Right ventricle myocardium superior (tissue), 1 donor: ENCODE measurements at regions of chr5 and their contacts with region 1.

Region 1: GRCh38 chr5:160021831-160022446 is 13.0 kb downstream of the TTC1 start:
- DNase-seq: no peak
- ATAC-seq: peak; percentile 93

Region 2: GRCh38 chr5:160159991-160160792 is 138.3 kb after region 1 on chr5:
- intact Hi-C with region 1: no loop called
- DNase-seq: no peak
- ATAC-seq: no peak

Region 3: GRCh38 chr5:160188142-160189015 is 166.4 kb after region 1 on chr5:
- intact Hi-C with region 1: no loop called
- DNase-seq: peak; percentile 83
- ATAC-seq: peak; percentile 84

Region 4: DNA sequence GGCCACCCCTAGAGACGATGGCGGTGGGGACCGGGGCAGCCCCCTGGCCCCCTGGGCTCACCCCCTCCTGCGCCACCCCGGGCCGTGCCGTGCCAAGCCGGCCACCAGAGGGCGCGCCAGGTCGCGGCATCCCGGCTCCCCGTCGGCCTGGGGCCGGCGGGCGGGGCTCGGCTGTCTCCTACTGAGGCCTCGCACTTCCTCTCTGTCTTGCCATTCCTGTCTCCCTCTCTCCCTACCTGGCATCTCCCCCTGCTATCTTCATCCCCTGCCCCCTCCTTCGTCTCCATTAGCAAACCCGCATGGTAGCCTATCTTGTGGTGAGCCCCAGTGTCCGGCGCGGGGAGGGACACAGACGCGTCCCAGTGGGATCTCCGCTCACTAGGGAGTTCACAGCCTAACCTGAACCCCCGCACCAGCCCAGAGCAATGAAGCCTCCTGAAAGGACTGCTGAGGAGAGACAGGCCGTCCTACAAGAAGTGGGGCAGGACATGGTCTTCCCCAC is 177.5 kb after region 1 on chr5:
- intact Hi-C with region 1: loop called (anchors 5 kb)
- DNase-seq: peak; percentile 87
- ATAC-seq: peak; percentile 99

Region 5: GRCh38 chr5:160221082-160221481 is 199.1 kb after region 1 on chr5:
- intact Hi-C with region 1: no loop called
- DNase-seq: no peak
- ATAC-seq: no peak

Region 6: DNA sequence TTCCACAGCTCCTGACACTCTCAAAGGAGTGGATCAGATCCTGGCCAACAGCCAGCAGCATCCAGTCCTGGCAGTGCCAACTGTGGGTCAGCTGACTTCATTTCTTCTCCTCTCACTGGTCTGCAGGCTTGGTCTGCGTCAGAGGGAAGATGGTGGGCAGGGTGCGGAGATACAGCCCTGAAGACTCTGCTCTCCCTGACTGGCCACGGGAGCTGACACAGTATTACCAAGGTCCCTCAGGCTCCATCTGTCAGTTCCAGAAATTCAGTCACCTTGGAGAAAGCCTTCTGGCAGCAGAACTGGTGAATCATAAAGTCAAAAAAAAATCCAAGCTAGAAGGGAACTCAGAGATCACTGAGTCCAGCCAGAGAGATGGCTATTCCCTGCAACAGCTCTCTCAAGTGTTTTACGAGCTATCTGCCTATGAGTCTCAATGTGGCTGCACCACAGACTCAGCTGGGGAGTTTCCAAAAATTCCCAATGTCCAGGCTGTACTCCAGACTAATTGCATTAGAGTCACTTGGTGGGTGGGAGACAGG is 320.5 kb after region 1 on chr5:
- intact Hi-C with region 1: loop called (anchors 5 kb)
- DNase-seq: no peak
- ATAC-seq: no peak

Region 7: GRCh38 chr5:160399402-160400353 is 377.7 kb after region 1 on chr5 and contains the start of gene FAM200C:
- intact Hi-C with region 1: loop called (anchors 10 kb)
- DNase-seq: peak; percentile 93
- ATAC-seq: peak; percentile 99
- total RNA-seq, gene FAM200C: 3.8 TPM

Region 8: DNA sequence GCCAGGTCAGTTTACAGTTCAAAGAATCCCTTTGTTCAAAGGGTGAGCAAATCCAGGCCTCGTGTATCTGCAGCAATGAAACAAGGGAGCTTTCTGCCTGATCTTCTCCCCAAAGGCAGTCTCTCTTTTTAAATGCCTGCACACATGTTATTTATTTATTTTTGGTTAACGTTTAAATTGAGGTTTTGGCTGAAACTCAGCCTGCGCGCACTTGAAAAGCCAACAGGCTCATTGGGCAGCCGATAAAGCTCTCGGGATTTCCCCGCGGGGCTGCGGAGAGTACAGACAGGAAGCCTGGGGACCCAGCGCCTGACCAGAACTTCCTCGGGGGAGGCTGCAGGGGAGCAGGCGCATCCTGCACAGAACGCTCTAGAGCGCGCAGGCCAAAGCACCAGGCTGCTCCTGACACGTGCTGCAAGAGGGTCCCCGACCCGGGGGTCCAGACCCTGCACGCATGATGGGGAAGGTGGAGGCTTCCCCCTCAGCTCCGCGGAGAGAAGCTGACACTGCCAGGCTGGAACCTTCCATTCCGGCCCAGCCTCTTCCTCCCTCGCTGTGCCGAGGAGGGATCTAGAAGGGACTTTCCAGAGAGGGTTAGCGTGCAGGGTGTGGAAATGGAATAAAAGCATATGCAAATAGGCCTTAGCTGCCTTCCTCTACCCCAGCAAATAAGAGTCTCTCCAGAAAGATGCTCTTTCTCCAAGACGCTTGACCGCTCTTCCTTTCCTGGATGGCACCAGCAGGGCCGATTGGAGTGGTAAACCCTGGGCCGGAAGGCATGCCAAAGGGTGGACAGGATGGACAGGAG is 445.8 kb after region 1 on chr5:
- intact Hi-C with region 1: no loop called
- DNase-seq: peak; percentile 79
- ATAC-seq: peak; percentile 70